ENCODE measurements at regions of chr7 and their contacts with region 1.

Region 1: GRCh38 chr7:32490127-32490822 is at the start of gene LSM5:
- DNase-seq: peak; percentile 94
- H3K4me3 Mint-ChIP-seq: peak within 1 kb of the TSS; percentile 82
- H3K27ac Mint-ChIP-seq: peak within 1 kb of the TSS; percentile 92
- H3K4me1 Mint-ChIP-seq: peaks cover 27% of the 10 kb centered on the region
- H3K27me3 Mint-ChIP-seq: no peaks in the 10 kb centered on the region
- total RNA-seq, gene LSM5: 111 to 120 TPM

Region 2: GRCh38 chr7:32506266-32507054 is 16.2 kb after region 1 on chr7:
- CTCF ChIA-PET with region 1: interaction called, 3 read pairs
- POLR2A ChIA-PET with region 1: interaction called, 14 read pairs
- intact Hi-C with region 1: loop called (anchors 1 kb)
- DNase-seq: peak; percentile 50
- H3K4me3 Mint-ChIP-seq: no peak overlapping the region
- H3K27ac Mint-ChIP-seq: peak overlapping the region; percentile 52
- H3K4me1 Mint-ChIP-seq: peaks cover 56% of the 10 kb centered on the region
- H3K27me3 Mint-ChIP-seq: no peaks in the 10 kb centered on the region

Region 3: GRCh38 chr7:32539919-32540531 is 49.8 kb after region 1 on chr7:
- CTCF ChIA-PET with region 1: no interaction called
- POLR2A ChIA-PET with region 1: interaction called, 4 read pairs
- intact Hi-C with region 1: loop called (anchors 5 kb)
- DNase-seq: peak; percentile 20
- H3K4me3 Mint-ChIP-seq: no peak overlapping the region
- H3K27ac Mint-ChIP-seq: peak overlapping the region; percentile 0
- H3K4me1 Mint-ChIP-seq: peaks cover 34% of the 10 kb centered on the region
- H3K27me3 Mint-ChIP-seq: no peaks in the 10 kb centered on the region

Region 4: DNA sequence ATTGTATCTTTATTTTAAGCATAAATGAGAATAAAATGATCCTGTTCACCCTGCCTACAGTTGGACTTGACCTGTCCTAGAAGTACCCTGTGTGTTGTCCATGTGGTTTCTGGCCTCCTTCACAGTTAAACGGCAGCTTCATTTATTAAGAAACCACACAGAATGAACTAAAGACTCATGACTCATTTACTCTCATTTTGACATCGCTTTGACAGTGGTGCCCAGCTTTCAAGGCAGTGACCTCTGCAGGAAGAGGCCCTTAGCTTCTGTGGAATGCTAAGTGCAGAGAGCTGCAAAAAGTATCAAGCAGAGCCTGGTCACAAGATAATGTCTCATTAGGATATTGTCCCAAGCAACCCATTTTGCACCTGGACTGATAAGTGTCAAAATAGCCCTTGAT is 98.4 kb after region 1 on chr7:
- CTCF ChIA-PET with region 1: interaction called, 9 read pairs
- POLR2A ChIA-PET with region 1: interaction called, 3 read pairs
- intact Hi-C with region 1: loop called (anchors 5 kb)
- DNase-seq: peak; percentile 40
- H3K4me3 Mint-ChIP-seq: no peak overlapping the region
- H3K27ac Mint-ChIP-seq: peak overlapping the region; percentile 63
- H3K4me1 Mint-ChIP-seq: peaks cover 25% of the 10 kb centered on the region
- H3K27me3 Mint-ChIP-seq: no peaks in the 10 kb centered on the region

Region 5: DNA sequence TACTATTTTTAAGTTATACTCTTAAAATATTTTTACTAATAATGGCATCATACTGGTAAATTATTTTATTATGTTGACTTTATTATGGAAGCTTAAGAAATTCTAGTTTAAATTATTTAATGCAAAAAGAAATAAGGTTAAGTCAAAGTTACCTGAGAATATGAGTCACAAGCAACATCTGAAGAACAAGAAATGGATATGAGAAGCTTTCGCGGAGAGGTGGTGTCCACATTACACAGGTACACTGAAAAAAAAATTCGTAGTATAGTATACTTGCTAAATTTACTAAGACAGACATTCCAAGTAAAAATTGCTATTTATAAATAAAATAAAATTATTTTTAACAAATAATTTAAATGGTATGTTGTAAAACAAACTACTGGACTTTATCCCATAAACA is 148.8 kb after region 1 on chr7:
- CTCF ChIA-PET with region 1: no interaction called
- POLR2A ChIA-PET with region 1: no interaction called
- intact Hi-C with region 1: loop called (anchors 5 kb)
- DNase-seq: no peak
- H3K4me3 Mint-ChIP-seq: no peak overlapping the region
- H3K27ac Mint-ChIP-seq: no peak overlapping the region
- H3K4me1 Mint-ChIP-seq: peaks cover 4% of the 10 kb centered on the region
- H3K27me3 Mint-ChIP-seq: peaks cover 17% of the 10 kb centered on the region

Region 6: DNA sequence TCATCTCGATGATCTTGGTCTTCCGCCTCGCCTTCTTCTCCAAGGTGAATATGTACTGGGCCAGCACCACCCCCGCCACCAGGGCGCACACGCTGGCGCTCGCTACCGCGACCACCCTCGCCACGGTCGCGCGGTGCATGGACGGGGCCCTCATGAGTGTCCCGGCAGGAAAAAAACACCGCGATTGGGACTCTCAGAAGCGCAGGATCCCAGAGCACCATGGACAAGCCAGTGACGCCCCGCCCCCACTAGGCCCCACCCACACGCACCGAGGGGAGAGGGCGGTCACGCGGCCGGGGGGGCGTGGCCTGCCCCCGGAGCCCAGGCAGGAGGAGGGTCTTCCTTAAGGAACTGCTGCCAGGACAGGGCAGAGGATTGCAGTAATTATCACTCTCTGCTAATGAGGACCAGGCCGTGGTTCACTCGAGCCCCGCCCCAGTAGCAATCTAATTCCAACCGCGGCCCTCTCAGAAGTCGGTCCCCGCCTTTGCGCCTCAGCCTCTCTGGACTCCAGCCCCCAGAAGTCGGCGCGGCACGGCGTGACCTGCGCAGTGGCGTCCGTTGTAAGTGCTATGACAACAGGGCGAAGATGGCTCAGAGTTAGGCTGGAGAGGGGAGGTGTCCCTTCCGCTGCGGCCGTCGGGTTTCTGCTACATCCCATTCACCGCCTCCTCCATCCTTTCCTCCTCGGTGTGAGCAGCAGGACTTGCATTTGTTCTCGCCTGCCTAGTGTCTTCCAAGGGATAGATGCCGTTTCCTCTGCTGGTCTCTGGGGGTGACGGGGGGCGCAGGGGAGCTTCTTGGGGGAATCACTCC is 638.9 kb after region 1 on chr7 and contains the start of gene BBS9:
- CTCF ChIA-PET with region 1: no interaction called
- POLR2A ChIA-PET with region 1: no interaction called
- intact Hi-C with region 1: loop called (anchors 5 kb)
- DNase-seq: peak; percentile 95
- H3K4me3 Mint-ChIP-seq: peak within 1 kb of the TSS; percentile 96
- H3K27ac Mint-ChIP-seq: peak within 1 kb of the TSS; percentile 78
- H3K4me1 Mint-ChIP-seq: peaks cover 18% of the 10 kb centered on the region
- H3K27me3 Mint-ChIP-seq: no peaks in the 10 kb centered on the region
- total RNA-seq, gene BBS9: 9.2 to 9.5 TPM